Activated CD4-positive, alpha-beta T cell treated with anti-CD3 and anti-CD28 coated beads for 36 hours (primary cell): ENCODE measurements at regions of chr5 and their contacts with region 1.

Region 1: GRCh38 chr5:137997726-137998213 is 35.1 kb downstream of the FAM13B start:
- DNase-seq: peak; percentile 40
- ATAC-seq: peak; percentile 96
- H3K4me3 Mint-ChIP-seq: no peak overlapping the region
- H3K27ac Mint-ChIP-seq: peak overlapping the region; percentile 83
- H3K4me1 Mint-ChIP-seq: peaks cover 43% of the 10 kb centered on the region
- H3K27me3 Mint-ChIP-seq: no peaks in the 10 kb centered on the region

Region 2: DNA sequence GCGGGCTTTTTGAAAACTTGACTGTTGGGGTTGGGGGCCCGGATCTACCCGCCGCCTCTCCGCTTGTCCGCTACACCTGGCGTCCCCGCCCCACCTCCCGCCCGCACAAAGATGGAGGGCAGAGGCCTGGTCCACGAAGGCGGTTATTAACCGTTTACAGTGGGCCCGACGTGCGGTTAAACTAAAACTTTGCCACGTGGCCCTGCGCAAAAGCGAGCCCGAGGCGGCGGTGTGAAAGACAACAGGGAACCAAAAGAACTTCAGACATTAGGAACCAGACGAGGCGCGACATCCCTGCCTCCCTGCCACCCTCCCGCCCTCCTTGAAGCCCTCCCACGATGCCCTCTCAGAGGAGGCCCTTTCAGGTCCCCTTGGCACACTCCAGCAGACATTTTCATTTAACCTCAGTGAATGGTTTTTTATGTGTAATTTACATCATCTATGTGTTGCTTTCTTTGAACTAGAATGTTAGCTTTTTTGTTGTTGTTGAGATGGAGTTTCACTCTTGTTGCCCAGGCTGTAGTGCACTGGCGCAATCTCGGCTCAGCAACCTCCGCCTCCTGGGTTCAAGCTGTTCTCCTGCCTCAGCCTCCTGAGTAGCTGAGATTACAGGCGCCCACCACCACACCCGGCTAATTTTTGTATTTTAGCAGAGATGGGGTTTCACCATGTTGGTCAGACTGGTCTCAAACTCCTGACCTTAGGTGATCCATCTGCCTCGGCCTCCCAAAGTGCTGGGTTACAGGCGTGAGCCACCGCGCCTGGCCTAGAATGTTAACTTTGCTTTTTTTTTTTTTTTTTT is 242.6 kb before region 1 on chr5:
- CTCF ChIA-PET with region 1: no interaction called
- POLR2A ChIA-PET with region 1: no interaction called
- intact Hi-C with region 1: no loop called
- DNase-seq: no peak
- ATAC-seq: peak; percentile 1
- H3K4me3 Mint-ChIP-seq: peak overlapping the region; percentile 77
- H3K27ac Mint-ChIP-seq: peak overlapping the region; percentile 97
- H3K4me1 Mint-ChIP-seq: peaks cover 24% of the 10 kb centered on the region
- H3K27me3 Mint-ChIP-seq: no peaks in the 10 kb centered on the region

Region 3: GRCh38 chr5:137935190-137935589 is 62.6 kb before region 1 on chr5:
- CTCF ChIA-PET with region 1: no interaction called
- POLR2A ChIA-PET with region 1: no interaction called
- intact Hi-C with region 1: loop called (anchors 2 to 5 kb)
- DNase-seq: no peak
- ATAC-seq: no peak
- H3K4me3 Mint-ChIP-seq: no peak overlapping the region
- H3K27ac Mint-ChIP-seq: no peak overlapping the region
- H3K4me1 Mint-ChIP-seq: peaks cover 28% of the 10 kb centered on the region
- H3K27me3 Mint-ChIP-seq: no peaks in the 10 kb centered on the region

Region 4: GRCh38 chr5:138028971-138029365 is 31.2 kb after region 1 on chr5:
- CTCF ChIA-PET with region 1: interaction called, 4 read pairs
- POLR2A ChIA-PET with region 1: no interaction called
- intact Hi-C with region 1: loop called in 1 of 2 experiments (anchors 2 kb)
- DNase-seq: no peak
- ATAC-seq: no peak
- H3K4me3 Mint-ChIP-seq: no peak overlapping the region
- H3K27ac Mint-ChIP-seq: no peak overlapping the region
- H3K4me1 Mint-ChIP-seq: peaks cover 73% of the 10 kb centered on the region
- H3K27me3 Mint-ChIP-seq: no peaks in the 10 kb centered on the region